ENCODE measurements at regions of chr4 and their contacts with region 1.

Region 1: DNA sequence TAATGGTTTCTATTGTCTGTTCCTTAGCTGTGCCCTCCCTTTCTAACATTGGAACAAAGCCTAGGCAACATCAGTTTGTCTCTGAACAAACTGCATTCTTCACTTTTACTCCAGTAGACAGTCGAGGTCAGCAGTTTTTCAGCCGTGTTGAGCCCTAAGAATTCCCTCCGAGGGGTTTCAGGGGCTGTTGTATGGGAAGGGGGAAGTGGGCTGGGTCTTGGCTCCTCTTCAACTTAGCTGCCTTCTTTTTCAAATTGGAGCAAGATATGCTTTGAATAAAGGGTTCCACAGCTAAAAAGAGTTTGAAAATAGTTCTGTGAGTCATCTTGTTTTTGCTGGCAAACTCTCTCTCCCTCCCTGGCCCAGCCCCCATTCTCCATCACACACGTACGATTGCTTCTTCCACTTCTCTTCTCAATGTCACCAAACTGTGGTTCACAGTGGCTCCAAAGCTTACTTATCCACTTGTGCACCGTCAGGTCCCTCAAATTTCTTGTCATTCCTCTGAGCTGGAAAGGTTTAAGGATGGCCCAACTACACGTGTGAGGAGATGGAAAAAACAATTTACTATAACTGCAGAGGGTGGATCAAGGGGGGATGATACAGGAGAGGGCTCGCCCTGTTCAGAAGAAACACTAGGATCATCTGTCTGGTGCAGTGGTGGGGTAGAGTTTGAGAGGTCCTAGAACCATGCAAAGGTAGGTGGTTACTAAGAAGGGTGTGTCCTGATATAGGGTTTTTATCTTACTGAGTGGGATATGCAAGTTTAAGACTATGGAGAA is 9.2 kb upstream of the MAML3 start:
- DNase-seq: no peak
- ATAC-seq: peak; percentile 20
- H3K4me3 ChIP-seq: no peak overlapping the region
- H3K27ac ChIP-seq: no peak overlapping the region
- H3K4me1 ChIP-seq: peaks cover 0 to 14% of the 10 kb centered on the region in 2 donors
- H3K27me3 ChIP-seq: no peaks in the 10 kb centered on the region
- CTCF ChIP-seq: no peak

Region 2: DNA sequence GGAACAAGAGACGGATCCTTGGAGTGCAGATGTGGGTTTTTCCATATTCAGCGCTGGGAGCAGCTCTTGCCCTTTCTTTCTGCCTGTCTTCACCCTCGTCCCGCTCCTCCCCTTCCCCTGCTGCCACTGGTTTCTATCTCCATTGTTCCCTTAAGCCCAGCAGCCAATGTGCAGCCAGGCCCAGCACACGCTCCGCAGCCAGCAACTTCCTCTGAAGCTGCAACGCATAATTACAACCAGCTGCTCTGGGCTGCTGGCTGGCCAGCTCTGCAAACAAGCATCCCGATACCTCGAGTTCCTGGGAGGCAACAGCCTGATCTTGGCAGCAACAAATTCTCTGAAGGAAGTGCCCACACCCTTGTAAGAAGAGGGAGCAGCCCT is 74.4 kb after region 1 on chr4:
- intact Hi-C with region 1: loop called in 1 of 2 experiments (anchors 5 kb)
- DNase-seq: peak; percentile 55 to 87 (median 75)
- ATAC-seq: peak; percentile 81
- H3K4me3 ChIP-seq: no peak overlapping the region
- H3K27ac ChIP-seq: peak overlapping the region; percentile 78 to 83
- H3K4me1 ChIP-seq: peaks cover 21 to 33% of the 10 kb centered on the region in 2 donors
- H3K27me3 ChIP-seq: no peaks in the 10 kb centered on the region
- CTCF ChIP-seq: no peak